Gastrocnemius medialis (tissue), 4 donors: ENCODE measurements at regions of chr12 and their contacts with region 1.

Region 1: DNA sequence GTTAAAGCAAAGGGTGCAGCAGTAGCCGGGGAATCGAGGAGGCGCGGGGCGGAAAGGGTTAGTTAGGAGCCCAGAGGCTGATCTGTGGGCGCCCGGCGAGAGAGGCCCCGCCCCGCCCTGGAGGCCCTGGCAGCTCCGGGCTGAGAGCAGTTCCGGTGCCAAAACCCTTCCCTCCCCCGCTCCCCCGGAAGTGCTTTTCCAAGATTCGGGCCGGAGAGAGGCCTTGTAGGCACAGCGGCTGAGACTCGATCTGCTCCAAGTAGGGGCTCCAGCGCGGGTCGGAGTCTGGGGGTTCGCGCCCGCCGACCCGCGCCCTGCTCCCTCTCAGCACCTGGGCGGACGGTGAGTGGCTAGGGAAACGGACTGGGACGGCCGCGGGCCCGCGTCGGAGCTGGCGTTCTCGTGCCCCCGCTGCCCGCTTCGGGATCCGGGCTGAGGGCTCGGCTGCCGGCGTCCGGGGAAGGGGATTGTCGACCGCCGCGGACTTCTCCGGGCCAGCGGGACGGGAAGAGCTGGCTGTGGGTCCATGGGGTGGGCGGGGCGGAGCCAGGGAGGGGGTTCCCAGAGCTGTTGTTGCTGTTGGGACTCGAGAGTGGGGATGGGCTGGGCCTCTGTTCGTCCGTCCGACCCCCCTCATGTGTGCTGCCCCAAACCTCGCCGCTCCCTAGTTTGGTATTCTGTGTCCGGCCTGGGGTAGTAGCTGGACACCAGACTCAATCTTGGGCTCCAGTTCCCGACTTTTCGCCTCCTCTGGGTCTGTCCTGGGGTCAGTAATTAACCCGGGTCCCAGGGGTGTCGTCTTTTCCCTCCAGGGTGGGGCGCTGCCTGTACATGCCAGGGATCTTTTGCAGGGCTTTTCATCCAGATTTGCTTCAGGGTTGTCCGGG is at the start of gene FRS2:
- DNase-seq: peak; percentile 80 to 88
- ATAC-seq: peak; percentile 99
- H3K4me3 ChIP-seq: peak within 1 kb of the TSS; percentile 92 to 96 (median 94)
- H3K27ac ChIP-seq: peak within 1 kb of the TSS; percentile 83 to 96 (median 92)
- H3K4me1 ChIP-seq: peaks cover 43 to 45% of the 10 kb centered on the region in 2 donors
- H3K27me3 ChIP-seq: no peaks in the 10 kb centered on the region
- CTCF ChIP-seq: peak in 3 of 5 experiments; percentile 21 to 45 (median 23)
- POLR2A ChIP-seq: peak; percentile 73 to 80
- total RNA-seq, gene FRS2: 21.0 to 32.1 (median 21.3) TPM

Region 2: DNA sequence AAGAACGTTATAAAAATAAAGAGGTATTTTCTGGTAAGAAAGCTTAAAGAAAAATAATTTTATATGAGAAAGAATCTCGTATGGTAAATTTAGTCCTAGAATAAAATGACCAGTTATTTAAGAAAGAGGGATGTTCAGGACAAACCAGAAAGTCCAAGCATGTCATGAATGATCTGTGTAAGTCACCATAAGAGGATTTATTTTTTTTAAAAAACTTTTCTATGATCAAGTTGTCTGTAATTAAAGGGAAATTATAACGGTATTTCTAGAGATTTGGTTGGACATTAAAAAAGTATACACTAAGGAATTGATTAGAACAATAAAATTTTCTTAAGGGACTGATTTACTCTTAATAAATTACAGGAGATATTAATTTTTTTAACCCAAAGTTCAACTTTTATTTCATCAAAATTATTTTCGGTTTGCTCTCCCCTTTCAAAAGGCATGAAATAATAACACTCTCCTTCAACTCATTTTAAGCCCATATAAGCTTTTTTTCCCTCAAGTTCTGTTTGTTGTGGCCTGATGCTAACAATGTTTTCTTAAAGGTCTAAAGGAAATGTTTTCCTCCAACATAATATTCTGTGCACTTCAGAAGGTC is 281.0 kb before region 1 on chr12:
- in situ Hi-C with region 1: no loop called
- intact Hi-C with region 1: no loop called
- DNase-seq: no peak
- ATAC-seq: no peak
- H3K4me3 ChIP-seq: no peak overlapping the region
- H3K27ac ChIP-seq: no peak overlapping the region
- H3K4me1 ChIP-seq: no peaks in the 10 kb centered on the region
- H3K27me3 ChIP-seq: no peaks in the 10 kb centered on the region
- CTCF ChIP-seq: no peak
- POLR2A ChIP-seq: no peak

Region 3: GRCh38 chr12:69511469-69512267 is 41.2 kb after region 1 on chr12:
- in situ Hi-C with region 1: no loop called
- intact Hi-C with region 1: loop called (anchors 2 kb)
- DNase-seq: peak; percentile 39 to 71
- ATAC-seq: peak; percentile 100
- H3K4me3 ChIP-seq: no peak overlapping the region
- H3K27ac ChIP-seq: peak overlapping the region; percentile 54 to 78 (median 69)
- H3K4me1 ChIP-seq: peaks cover 58 to 67% of the 10 kb centered on the region in 2 donors
- H3K27me3 ChIP-seq: no peaks in the 10 kb centered on the region
- CTCF ChIP-seq: no peak
- POLR2A ChIP-seq: no peak